ENCODE measurements at regions of chr14 and their contacts with region 1.

Region 1: GRCh38 chr14:103099081-103099732 is 4.7 kb downstream of the EXOC3L4 start:
- DNase-seq: no peak
- ATAC-seq: no peak
- H3K4me3 ChIP-seq: no peak overlapping the region
- H3K27ac ChIP-seq: no peak overlapping the region
- H3K4me1 ChIP-seq: peaks cover 7 to 33% (median 23%) of the 10 kb centered on the region in 9 donors
- H3K27me3 ChIP-seq: peaks cover 26 to 66% (median 53%) of the 10 kb centered on the region in 7 donors
- CTCF ChIP-seq: no peak

Region 2: DNA sequence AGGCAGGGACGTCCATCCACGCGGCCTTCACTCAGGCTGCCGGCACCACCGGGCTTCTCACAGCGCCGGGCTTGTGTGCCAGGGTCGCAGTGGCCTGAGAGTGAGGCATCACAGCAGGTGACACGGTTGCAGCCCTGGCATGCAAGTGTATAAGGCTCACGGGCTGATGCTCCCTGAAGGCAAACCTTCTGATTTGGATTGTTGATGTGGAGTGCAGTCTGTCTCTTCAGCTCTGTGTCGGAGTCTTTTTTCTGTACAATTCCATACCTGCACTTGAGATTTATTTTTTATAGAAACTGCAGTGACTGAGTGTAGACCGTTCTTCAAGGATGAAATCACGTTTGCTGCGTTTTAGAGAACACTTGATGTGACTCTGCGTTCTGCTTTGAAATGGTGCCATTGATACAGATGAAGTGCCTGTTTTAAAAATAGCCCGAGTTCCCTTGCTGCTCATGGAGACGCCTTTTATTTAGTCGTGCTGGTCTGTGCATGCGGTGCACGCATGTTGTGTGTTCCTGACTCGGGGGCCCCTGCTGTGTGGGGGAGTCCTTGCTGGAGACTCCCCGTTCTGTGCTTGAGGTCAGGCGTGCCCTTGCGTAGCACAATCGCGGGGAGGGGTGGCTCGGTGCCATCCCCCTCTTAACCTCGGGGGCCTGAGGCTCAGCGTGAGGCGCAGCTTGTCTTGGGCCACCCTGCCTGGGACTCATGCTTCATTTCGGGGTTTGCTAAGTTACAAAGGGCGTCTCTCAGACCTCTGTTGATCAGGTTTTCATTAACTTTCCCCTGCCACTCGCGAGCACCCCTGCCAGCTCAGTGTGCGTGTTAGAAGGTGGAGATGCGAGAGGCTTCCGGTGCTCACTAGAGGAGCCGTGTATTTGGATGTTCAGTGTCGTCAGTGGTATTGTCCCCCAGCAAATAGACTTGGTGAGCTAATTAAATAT is 198.3 kb before region 1 on chr14:
- intact Hi-C with region 1: no loop called
- DNase-seq: no peak
- ATAC-seq: peak in 6 of 8 donors; percentile 29 to 75 (median 60)
- H3K4me3 ChIP-seq: peak overlapping the region in 5 of 10 donors; percentile 5 to 28 (median 20)
- H3K27ac ChIP-seq: peak overlapping the region in 2 of 10 donors; percentile 15 to 27
- H3K4me1 ChIP-seq: peaks cover 0 to 12% (median 0%) of the 10 kb centered on the region in 9 donors
- H3K27me3 ChIP-seq: no peaks in the 10 kb centered on the region
- CTCF ChIP-seq: no peak

Region 3: DNA sequence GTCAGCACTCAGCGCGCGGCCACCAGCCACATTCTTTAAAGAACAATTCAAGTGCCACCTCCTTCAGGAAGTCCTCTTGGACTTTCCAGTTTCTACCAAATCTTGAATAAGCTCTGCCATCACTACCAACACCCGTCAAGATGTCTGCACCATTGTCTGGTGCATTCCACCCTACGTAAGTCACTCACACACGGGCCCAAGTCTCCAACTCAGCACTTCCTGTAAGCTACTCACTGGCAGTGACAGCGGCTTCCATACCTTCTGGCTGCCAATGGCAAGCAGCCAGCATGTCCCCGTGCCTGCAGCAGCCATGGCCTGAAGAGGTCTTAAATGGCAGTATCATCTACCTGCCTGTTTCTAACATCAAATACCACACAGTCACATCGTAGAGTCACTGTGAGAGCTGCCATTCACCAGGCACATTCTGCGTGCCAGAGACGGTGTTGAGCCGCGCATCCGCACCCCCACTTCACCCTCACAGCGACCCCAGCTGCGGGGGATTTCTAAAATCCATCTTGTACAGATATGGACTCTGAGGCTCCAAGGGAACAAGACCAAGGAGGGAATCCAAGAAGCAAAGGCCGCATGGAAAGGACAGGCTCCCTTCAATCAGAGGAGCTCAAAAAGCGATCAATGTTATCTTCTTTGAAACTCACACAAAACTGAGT is 90.2 kb before region 1 on chr14:
- intact Hi-C with region 1: no loop called
- DNase-seq: peak in 1 of 2 donors; percentile 55
- ATAC-seq: peak in 3 of 8 donors; percentile 23 to 61 (median 38)
- H3K4me3 ChIP-seq: no peak overlapping the region
- H3K27ac ChIP-seq: peak overlapping the region in 3 of 10 donors; percentile 22 to 56 (median 26)
- H3K4me1 ChIP-seq: peaks cover 0 to 44% (median 22%) of the 10 kb centered on the region in 9 donors
- H3K27me3 ChIP-seq: no peaks in the 10 kb centered on the region
- CTCF ChIP-seq: no peak

Region 4: DNA sequence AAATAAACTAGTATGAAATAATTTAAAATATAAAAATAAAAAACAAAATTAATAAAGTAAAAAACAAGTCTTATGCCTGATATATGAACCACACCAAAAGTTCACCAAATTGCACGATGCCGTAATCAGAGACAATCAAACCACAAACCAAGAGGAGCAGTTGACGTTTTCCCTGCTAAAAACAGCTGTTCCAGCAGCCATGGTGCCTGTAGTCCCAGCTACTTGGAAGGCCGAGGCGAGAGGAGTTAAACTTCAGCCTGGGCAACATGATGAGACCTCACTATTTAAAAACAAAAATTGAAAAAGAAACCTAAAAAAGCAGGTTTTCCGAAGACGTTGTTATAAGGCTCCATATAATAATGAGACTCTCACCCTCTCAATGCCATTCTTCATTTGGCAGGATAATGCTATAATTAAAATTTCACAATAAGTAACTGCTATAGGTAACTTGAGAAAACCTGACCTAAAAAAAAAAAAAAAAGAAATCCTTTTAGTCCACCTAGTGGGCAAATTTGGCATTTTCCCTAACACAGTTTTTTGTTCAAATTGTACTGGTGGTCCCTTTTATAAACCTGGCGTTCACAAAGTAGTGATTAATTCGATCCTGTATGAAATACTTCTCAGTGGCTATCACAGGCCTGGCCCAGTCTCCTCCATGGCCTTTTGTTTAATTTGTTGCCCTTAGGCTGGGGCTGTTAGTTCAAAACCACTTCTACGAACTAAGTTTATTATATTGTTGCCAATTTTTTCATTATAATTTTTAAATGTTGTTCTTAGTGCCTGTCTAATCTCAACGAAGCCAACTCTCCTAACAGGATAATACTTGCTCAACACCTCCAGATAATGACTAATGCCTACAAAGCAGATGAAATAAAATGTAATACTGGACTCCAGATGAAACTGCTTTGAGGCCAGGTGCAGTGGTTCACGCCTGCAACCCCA is 86.1 kb after region 1 on chr14:
- intact Hi-C with region 1: loop called in 6 of 10 experiments (anchors 2 to 10 kb)
- DNase-seq: no peak
- ATAC-seq: no peak
- H3K4me3 ChIP-seq: no peak overlapping the region
- H3K27ac ChIP-seq: no peak overlapping the region
- H3K4me1 ChIP-seq: peaks cover 0 to 12% (median 10%) of the 10 kb centered on the region in 9 donors
- H3K27me3 ChIP-seq: peaks cover 0 to 49% (median 32%) of the 10 kb centered on the region in 7 donors
- CTCF ChIP-seq: peak; percentile 52 to 73 (median 66)

Measured in heart right ventricle (tissue), 16 donors.